GM18951 (cell line): ENCODE measurements at regions of chr11 and their contacts with region 1.

Region 1: GRCh38 chr11:87972133-87972532 is 203.1 kb downstream of the RAB38 start:
- POLR2A ChIP-seq: no peak

Region 2: DNA sequence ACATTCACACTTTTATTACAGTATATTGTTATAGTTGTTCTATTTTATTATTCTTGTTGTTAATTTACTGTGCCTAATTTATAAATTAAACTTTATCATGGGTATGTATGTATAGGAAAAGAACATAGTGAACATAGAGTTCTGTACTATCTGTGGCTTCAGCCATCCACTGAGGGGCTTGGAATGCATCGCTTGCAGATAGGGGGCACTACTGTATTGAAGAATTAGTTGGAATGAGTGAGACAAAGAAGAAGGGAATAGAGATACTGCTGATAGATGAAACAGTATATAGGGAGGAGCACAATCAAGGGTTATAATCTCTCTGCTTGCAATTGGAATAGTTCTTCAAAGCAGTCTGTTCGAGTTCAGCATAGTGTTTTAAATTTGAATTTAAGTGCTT is 229.1 kb before region 1 on chr11:
- in situ Hi-C with region 1: no loop called
- POLR2A ChIP-seq: no peak

Region 3: GRCh38 chr11:88016392-88017170 is 44.4 kb after region 1 on chr11:
- in situ Hi-C with region 1: loop called (anchors 5 kb)
- POLR2A ChIP-seq: no peak

Region 4: GRCh38 chr11:88651556-88651955 is 679.4 kb after region 1 on chr11:
- in situ Hi-C with region 1: no loop called
- POLR2A ChIP-seq: no peak